Psoas muscle (tissue), 8 donors: ENCODE measurements at regions of chr7 and their contacts with region 1.

Region 1: GRCh38 chr7:140810830-140811556 is 113.7 kb downstream of the BRAF start:
- DNase-seq: no peak
- ATAC-seq: peak; percentile 85 to 97 (median 90)
- H3K4me3 ChIP-seq: no peak overlapping the region
- H3K27ac ChIP-seq: no peak overlapping the region
- H3K4me1 ChIP-seq: no peaks in the 10 kb centered on the region
- H3K27me3 ChIP-seq: no peaks in the 10 kb centered on the region
- CTCF ChIP-seq: peak; percentile 79

Region 2: DNA sequence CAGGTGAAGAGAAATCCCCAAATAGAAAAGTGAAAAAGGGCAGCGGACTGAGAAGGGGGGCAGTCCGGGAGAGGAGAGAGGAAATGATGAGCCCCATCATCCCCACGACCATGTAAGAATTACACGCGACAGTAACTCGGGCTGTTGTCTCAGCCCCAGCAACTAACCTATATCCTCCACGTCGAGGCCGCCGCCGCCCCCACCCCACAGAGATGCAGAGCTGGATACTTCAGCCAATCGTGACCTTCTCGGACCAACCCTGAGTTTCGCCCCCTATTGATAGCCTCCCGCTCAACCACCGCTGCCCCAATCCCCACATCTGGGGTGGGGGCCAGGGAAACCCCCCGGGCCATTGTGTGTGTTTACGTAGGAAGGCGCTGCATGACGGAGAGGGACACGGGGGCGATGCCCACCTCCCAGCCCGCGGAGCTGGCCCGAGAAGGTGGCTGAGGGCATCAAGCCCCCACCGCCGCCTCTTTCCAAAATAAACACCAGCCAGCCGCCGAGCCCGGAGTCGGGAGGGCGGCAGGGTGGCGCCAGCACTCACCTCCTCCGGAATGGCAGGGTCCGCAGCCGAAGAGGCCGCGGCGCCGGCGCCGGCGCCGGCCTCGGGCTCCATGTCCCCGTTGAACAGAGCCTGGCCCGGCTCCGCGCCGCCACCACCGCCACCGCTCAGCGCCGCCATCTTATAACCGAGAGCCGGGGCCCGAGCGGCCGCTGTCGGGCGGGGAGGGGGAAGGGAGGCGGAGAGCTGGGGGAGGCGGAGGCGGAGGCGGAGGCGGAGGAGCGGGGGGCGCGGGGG is 113.2 kb after region 1 on chr7:
- intact Hi-C with region 1: loop called (anchors 1 to 5 kb)
- DNase-seq: peak; percentile 76 to 90
- ATAC-seq: peak; percentile 84 to 88 (median 86)
- H3K4me3 ChIP-seq: peak overlapping the region; percentile 84
- H3K27ac ChIP-seq: peak overlapping the region; percentile 98
- H3K4me1 ChIP-seq: peaks cover 31% of the 10 kb centered on the region
- H3K27me3 ChIP-seq: no peaks in the 10 kb centered on the region
- CTCF ChIP-seq: no peak

Region 3: DNA sequence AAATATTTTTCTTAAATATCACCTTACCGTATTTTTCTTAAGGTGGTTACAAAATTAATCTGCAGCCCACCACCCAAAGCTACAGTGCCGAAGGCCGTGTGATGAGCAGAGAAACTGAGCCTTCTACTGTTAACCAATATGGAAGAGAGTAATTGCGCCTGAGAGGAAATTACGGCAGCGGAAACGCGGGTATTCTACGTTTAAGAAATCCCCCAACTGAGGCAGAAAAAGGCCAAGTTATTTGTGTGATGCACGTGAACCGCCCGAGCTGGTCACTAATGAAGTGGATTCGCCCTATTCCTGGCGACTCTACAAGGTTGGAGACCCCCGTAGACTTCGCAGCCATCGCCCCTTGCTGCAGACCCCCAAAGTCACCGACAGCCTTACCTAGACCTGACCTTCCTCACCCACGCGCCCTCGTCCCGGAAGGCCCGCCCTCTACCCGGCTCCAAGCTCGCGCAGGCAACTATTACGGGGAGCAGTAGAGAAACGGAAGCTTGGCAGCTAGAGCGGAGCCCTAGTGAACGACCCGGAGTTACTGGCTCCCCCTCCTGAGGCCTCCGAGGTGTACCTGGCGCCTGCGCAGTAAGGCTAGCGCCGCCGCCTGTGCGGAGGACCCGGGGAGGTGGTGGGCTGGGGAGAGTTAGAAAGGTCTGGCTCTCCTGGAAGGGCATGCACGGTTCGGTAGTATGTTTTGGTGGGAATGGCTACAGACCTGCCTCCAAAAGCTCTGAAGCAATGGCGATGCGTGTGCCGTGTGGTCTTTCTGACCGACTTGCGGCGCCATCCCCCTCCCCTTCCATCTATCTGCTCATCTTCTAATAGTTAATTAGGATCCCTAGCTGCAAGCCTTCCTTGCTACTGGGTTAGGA is 203.8 kb after region 1 on chr7 and contains the start of gene MRPS33:
- intact Hi-C with region 1: loop called (anchors 1 to 2 kb)
- DNase-seq: peak; percentile 93 to 96
- ATAC-seq: peak; percentile 99 to 100 (median 100)
- H3K4me3 ChIP-seq: peak within 1 kb of the TSS; percentile 85
- H3K27ac ChIP-seq: peak within 1 kb of the TSS; percentile 87
- H3K4me1 ChIP-seq: peaks cover 11% of the 10 kb centered on the region
- H3K27me3 ChIP-seq: peaks cover 0 to 7% (median 0%) of the 10 kb centered on the region in 3 donors
- CTCF ChIP-seq: peak; percentile 15
- total RNA-seq, gene MRPS33: 70.5 to 105 (median 93.7) TPM

Region 4: GRCh38 chr7:141220263-141220880 is 409.4 kb after region 1 on chr7:
- intact Hi-C with region 1: loop called in 1 of 2 experiments (anchors 10 kb)
- DNase-seq: no peak
- ATAC-seq: no peak
- H3K4me3 ChIP-seq: no peak overlapping the region
- H3K27ac ChIP-seq: no peak overlapping the region
- H3K4me1 ChIP-seq: no peaks in the 10 kb centered on the region
- H3K27me3 ChIP-seq: no peaks in the 10 kb centered on the region
- CTCF ChIP-seq: no peak

Region 5: GRCh38 chr7:141522657-141523342 is 711.8 kb after region 1 on chr7:
- intact Hi-C with region 1: loop called in 1 of 2 experiments (anchors 5 kb)
- DNase-seq: no peak
- ATAC-seq: no peak
- H3K4me3 ChIP-seq: no peak overlapping the region
- H3K27ac ChIP-seq: no peak overlapping the region
- H3K4me1 ChIP-seq: no peaks in the 10 kb centered on the region
- H3K27me3 ChIP-seq: no peaks in the 10 kb centered on the region
- CTCF ChIP-seq: no peak

Region 6: GRCh38 chr7:141533149-141533949 is 722.4 kb after region 1 on chr7:
- intact Hi-C with region 1: loop called (anchors 5 to 10 kb)
- DNase-seq: peak; percentile 51 to 79
- ATAC-seq: peak; percentile 78 to 92 (median 80)
- H3K4me3 ChIP-seq: no peak overlapping the region
- H3K27ac ChIP-seq: no peak overlapping the region
- H3K4me1 ChIP-seq: peaks cover 8% of the 10 kb centered on the region
- H3K27me3 ChIP-seq: no peaks in the 10 kb centered on the region
- CTCF ChIP-seq: peak; percentile 98

Region 7: GRCh38 chr7:141654551-141654950 is 843.6 kb after region 1 on chr7:
- intact Hi-C with region 1: loop called in 1 of 2 experiments (anchors 10 kb)
- DNase-seq: peak in 1 of 2 donors; percentile 26
- ATAC-seq: peak; percentile 59 to 67 (median 64)
- H3K4me3 ChIP-seq: no peak overlapping the region
- H3K27ac ChIP-seq: no peak overlapping the region
- H3K4me1 ChIP-seq: peaks cover 4% of the 10 kb centered on the region
- H3K27me3 ChIP-seq: no peaks in the 10 kb centered on the region
- CTCF ChIP-seq: peak; percentile 53